ENCODE measurements at regions of chr9 and their contacts with region 1.

Region 1: DNA sequence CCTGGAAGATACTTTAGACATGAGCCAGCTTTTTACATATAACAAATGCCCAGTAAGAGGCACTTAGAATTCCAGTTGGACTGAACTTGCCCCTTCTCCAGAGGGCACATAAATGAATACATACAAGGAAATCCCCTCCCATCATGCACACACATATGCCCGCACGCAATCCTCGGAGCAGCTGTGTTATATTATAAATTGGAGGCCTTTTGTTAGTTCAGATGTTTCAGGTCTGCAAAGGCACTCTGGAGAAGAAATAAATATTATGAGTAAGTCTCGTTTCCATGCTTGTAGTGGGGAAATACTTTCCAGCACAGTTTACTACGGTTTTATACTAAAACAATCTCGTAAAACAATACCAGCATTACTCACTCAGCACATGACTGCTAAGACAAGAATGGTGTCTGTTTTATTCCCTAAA is 17.6 kb upstream of the MUSK start:
- DNase-seq: peak; percentile 99
- ATAC-seq: peak; percentile 75
- H3K4me3 ChIP-seq: no peak overlapping the region
- H3K27ac ChIP-seq: peak overlapping the region; percentile 94; the same call in 1 of the 2 replicates
- H3K4me1 ChIP-seq: peaks cover 17% of the 10 kb centered on the region
- H3K27me3 ChIP-seq: no peaks in the 10 kb centered on the region
- CTCF ChIP-seq: no peak
- POLR2A ChIP-seq: no peak
- RAD21 ChIP-seq: no peak

Region 2: DNA sequence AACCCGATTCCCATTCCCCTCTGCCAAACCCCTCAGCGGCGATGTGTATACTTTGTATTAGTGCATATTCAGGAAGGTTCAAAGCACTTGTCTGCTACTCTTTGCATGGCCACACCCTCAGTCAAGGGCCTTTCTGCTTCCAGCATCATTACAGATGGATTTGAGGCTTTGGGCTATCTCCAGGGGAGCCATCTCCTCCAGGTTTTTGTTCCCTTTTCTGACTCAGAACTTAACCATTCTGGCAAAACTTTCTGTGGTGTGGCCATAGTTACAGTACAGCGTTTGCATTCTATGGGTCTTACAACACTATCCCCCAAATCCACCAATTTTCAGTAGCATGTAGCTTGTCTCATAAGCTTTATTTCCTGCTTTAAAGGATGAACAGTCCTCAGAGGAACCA is 35.5 kb before region 1 on chr9:
- CTCF ChIA-PET with region 1: no interaction called
- POLR2A ChIA-PET with region 1: no interaction called
- dilution Hi-C with region 1: no loop called
- in situ Hi-C with region 1: no loop called
- intact Hi-C with region 1: no loop called
- DNase-seq: peak; percentile 72
- ATAC-seq: peak; percentile 44
- H3K4me3 ChIP-seq: no peak overlapping the region
- H3K27ac ChIP-seq: no peak overlapping the region
- H3K4me1 ChIP-seq: peaks cover 2% of the 10 kb centered on the region; the same call in 1 of the 2 replicates
- H3K27me3 ChIP-seq: no peaks in the 10 kb centered on the region
- CTCF ChIP-seq: no peak
- POLR2A ChIP-seq: no peak
- RAD21 ChIP-seq: no peak

Region 3: GRCh38 chr9:110744753-110745384 is 93.9 kb after region 1 on chr9:
- CTCF ChIA-PET with region 1: no interaction called
- POLR2A ChIA-PET with region 1: no interaction called
- dilution Hi-C with region 1: no loop called
- in situ Hi-C with region 1: no loop called
- intact Hi-C with region 1: loop called (anchors 2 kb)
- DNase-seq: peak; percentile 98
- ATAC-seq: peak; percentile 79
- H3K4me3 ChIP-seq: no peak overlapping the region
- H3K27ac ChIP-seq: peak overlapping the region; percentile 100
- H3K4me1 ChIP-seq: peaks cover 17% of the 10 kb centered on the region
- H3K27me3 ChIP-seq: no peaks in the 10 kb centered on the region
- CTCF ChIP-seq: no peak
- POLR2A ChIP-seq: no peak
- RAD21 ChIP-seq: no peak; the same call in 1 of the 2 replicates

Region 4: GRCh38 chr9:110835404-110835803 is 184.4 kb after region 1 on chr9:
- CTCF ChIA-PET with region 1: no interaction called
- POLR2A ChIA-PET with region 1: interaction called, 13 read pairs
- dilution Hi-C with region 1: no loop called
- in situ Hi-C with region 1: no loop called
- intact Hi-C with region 1: loop called (anchors 1 kb)
- DNase-seq: peak; percentile 91
- ATAC-seq: peak; percentile 93
- H3K4me3 ChIP-seq: no peak overlapping the region
- H3K27ac ChIP-seq: peak overlapping the region; percentile 97; the same call in 1 of the 2 replicates
- H3K4me1 ChIP-seq: peaks cover 8% of the 10 kb centered on the region
- H3K27me3 ChIP-seq: no peaks in the 10 kb centered on the region
- CTCF ChIP-seq: no peak
- POLR2A ChIP-seq: no peak
- RAD21 ChIP-seq: no peak